Activated CD4-positive, alpha-beta T cell treated with anti-CD3 and anti-CD28 coated beads for 36 hours (primary cell): ENCODE measurements at regions of chr18 and their contacts with region 1.

Region 1: DNA sequence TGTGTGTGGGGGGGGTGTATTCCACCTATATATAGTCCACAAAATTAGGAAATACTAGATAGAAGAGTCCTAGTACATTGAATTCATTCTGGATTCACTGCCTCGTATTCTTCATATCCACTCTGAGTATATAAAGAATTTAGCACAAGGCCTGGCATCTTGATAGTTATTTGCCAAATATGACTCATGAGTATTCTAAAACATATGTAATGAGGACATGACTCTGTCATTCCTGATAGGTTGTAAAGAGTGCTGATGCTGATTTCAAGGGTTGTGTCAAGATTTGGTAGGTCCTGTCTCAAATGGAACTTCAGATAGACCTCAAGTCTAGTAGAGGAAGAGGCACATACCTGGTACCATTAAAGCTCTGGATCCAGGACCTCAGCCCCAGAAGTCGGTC is 173.4 kb upstream of the BOD1L2 start:
- DNase-seq: no peak
- ATAC-seq: no peak
- H3K4me3 Mint-ChIP-seq: no peak overlapping the region
- H3K27ac Mint-ChIP-seq: no peak overlapping the region
- H3K4me1 Mint-ChIP-seq: no peaks in the 10 kb centered on the region
- H3K27me3 Mint-ChIP-seq: no peaks in the 10 kb centered on the region

Region 2: GRCh38 chr18:56921896-56922480 is 51.5 kb before region 1 on chr18:
- CTCF ChIA-PET with region 1: no interaction called
- POLR2A ChIA-PET with region 1: no interaction called
- intact Hi-C with region 1: loop called in 1 of 2 experiments (anchors 2 kb)
- DNase-seq: no peak
- ATAC-seq: no peak
- H3K4me3 Mint-ChIP-seq: no peak overlapping the region
- H3K27ac Mint-ChIP-seq: no peak overlapping the region
- H3K4me1 Mint-ChIP-seq: peaks cover 4% of the 10 kb centered on the region
- H3K27me3 Mint-ChIP-seq: no peaks in the 10 kb centered on the region

Region 3: DNA sequence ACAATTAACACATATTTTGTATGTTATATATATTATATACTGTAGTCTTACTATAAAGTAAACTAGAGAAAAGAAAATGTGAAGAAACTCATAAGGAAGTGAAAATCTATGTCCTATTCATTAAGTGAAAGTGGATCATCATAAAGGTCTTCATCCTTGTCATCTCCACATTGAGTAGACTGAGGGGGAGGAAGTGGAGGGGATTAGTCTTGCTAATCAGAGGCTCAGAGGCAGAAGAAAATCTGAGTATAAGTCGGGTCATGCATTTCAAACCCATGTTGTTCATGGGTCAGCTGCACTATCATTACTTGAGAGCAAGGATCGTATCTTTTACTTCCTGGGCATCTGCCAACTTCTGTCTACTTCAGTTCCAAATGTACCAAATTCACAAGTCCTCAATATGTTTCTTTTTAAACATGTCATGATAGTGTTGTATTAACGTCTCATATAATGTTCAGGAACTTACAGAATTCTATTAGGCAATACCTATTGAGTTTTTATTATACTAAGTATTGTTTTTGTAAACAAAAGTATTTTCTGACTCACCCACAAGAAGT is 35.5 kb before region 1 on chr18:
- CTCF ChIA-PET with region 1: no interaction called
- POLR2A ChIA-PET with region 1: no interaction called
- intact Hi-C with region 1: no loop called
- DNase-seq: no peak
- ATAC-seq: no peak
- H3K4me3 Mint-ChIP-seq: no peak overlapping the region
- H3K27ac Mint-ChIP-seq: no peak overlapping the region
- H3K4me1 Mint-ChIP-seq: no peaks in the 10 kb centered on the region
- H3K27me3 Mint-ChIP-seq: no peaks in the 10 kb centered on the region